ENCODE measurements at regions of chr4 and their contacts with region 1.

Region 1: DNA sequence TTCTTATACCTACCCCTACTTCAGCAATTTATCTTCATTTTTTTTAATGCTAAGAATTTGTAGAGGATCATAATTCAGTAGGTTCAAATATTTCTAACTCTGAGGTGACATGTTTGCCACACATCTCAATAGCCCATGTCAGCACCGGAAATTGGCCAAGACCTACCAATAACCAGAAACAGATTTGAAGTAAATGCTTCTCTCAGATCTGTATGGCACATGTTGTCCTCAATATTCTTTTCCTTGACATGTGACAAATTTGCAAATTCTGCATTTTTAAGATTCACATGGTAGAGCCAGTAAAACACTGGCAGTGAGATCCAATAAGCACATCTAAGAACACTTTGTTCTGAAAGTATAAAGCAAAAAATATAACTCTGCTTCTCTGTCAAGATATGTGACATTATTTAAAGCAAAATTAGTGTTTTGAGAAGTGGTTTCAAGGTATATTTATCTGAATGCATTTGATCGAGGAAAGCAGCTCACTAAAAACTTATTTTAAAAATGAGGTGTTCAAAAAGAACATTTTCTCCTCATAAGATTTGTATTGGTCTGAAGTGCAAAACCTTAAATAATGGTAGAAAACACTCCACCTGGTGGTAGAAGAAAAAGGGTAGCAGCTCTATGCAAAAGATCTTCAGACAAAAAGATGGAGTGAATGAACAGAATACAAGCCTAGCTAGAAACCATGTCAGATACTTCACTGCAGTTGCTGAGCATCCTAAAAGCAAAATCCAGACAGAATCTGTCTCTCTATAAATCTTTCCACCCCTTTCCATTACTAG is 513.8 kb upstream of the FAM241A start:
- DNase-seq: no peak
- ATAC-seq: no peak
- H3K4me3 ChIP-seq: no peak overlapping the region
- H3K4me3 Mint-ChIP-seq: no peak overlapping the region
- H3K27ac ChIP-seq: no peak overlapping the region
- H3K27ac Mint-ChIP-seq: no peak overlapping the region
- H3K4me1 ChIP-seq: no peaks in the 10 kb centered on the region
- H3K4me1 Mint-ChIP-seq: no peaks in the 10 kb centered on the region
- H3K27me3 ChIP-seq: no peaks in the 10 kb centered on the region
- H3K27me3 Mint-ChIP-seq: no peaks in the 10 kb centered on the region
- CTCF ChIP-seq: no peak

Region 2: DNA sequence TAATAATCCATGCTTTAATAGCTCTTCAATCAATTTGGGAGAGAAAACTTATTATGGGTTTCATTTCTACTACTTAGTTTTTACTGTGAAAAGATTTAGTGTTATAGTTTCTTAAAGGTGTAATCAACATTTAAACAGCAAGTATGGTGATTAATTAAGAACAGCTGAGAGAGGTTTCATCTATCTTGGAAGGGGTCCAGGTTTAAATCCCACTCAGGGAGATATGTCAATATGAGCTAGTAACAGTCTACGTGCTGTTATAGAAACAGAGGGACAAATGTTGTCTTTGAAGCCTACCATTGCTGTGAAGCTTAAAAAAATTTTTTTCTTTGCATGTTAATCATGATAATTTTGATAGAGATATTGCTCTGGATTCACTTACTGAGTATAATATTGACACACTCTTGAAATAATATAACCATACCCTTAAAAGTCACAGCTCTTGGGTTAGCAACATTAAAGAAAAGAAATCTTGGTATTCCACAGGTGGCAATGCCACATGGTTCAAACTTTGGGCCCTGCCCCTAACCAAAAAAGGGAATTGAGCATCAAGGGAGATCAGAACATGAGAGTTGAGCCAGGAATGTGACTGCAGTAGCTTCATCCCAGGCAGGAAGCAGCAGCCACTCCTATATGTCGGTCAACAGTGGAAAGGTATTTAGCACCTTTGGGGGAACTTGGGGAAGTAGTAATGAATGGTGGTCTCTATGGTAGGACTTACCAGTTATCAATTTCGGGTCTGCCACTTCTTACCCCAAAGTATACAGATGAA is 1525.9 kb after region 1 on chr4:
- CTCF ChIA-PET with region 1: no interaction called
- POLR2A ChIA-PET with region 1: no interaction called
- intact Hi-C with region 1: loop called in 1 of 2 experiments (anchors 5 kb)
- DNase-seq: no peak
- ATAC-seq: no peak
- H3K4me3 ChIP-seq: no peak overlapping the region
- H3K4me3 Mint-ChIP-seq: no peak overlapping the region
- H3K27ac ChIP-seq: no peak overlapping the region
- H3K27ac Mint-ChIP-seq: no peak overlapping the region
- H3K4me1 ChIP-seq: no peaks in the 10 kb centered on the region
- H3K4me1 Mint-ChIP-seq: no peaks in the 10 kb centered on the region
- H3K27me3 ChIP-seq: no peaks in the 10 kb centered on the region
- H3K27me3 Mint-ChIP-seq: no peaks in the 10 kb centered on the region
- CTCF ChIP-seq: no peak